Activated CD4-positive, alpha-beta T cell treated with anti-CD3 and anti-CD28 coated beads for 36 hours (primary cell): ENCODE measurements at regions of chr13 and their contacts with region 1.

Region 1: GRCh38 chr13:74287724-74288169 is 153.5 kb upstream of the KLF12 start:
- DNase-seq: peak; percentile 88
- ATAC-seq: peak; percentile 60
- H3K4me3 Mint-ChIP-seq: peak overlapping the region; percentile 64
- H3K27ac Mint-ChIP-seq: peak overlapping the region; percentile 68
- H3K4me1 Mint-ChIP-seq: peaks cover 60% of the 10 kb centered on the region
- H3K27me3 Mint-ChIP-seq: no peaks in the 10 kb centered on the region

Region 2: DNA sequence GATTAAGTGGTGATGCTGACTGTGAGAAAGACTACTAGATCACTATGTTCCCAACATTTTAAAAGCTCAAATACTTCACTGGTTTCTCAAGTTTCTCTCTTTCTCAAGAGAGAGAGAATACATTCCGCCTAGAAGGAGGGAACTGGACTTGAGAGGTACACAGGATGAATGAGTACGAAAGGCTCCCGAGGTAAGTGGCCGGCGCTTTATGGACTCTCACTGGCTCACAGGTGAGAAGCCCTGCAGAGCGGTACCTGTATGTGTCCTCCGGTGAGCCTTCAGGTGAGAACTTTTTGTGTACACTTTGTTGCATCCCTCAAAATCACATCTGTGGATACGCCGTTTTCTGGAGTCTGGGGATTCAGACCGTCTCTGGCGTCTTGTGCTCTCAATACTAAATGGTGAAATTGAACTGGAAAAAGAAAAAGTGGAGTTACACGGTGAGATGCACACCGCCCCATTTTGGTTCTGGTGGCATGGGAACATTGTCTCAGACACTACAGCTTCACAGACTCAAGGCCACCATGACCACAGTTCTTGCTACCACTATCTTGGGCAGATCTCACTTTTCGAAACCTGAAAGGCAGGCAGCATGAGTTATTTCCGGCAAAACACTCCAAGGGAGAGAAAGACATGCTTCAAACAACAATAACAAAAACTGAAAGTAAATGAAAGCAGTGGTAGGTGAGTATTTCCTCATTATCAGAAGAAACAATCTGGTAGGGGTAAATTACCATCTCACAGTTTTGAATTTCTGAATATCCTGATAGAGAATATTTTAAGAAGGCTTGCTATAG is 572.4 kb before region 1 on chr13:
- CTCF ChIA-PET with region 1: no interaction called
- POLR2A ChIA-PET with region 1: no interaction called
- intact Hi-C with region 1: loop called in 1 of 2 experiments (anchors 2 kb)
- DNase-seq: peak; percentile 68
- ATAC-seq: peak; percentile 85
- H3K4me3 Mint-ChIP-seq: peak overlapping the region; percentile 50
- H3K27ac Mint-ChIP-seq: peak overlapping the region; percentile 83
- H3K4me1 Mint-ChIP-seq: peaks cover 53% of the 10 kb centered on the region
- H3K27me3 Mint-ChIP-seq: no peaks in the 10 kb centered on the region

Region 3: GRCh38 chr13:73835138-73835721 is 452.5 kb before region 1 on chr13:
- CTCF ChIA-PET with region 1: interaction called, 19 read pairs
- POLR2A ChIA-PET with region 1: no interaction called
- intact Hi-C with region 1: loop called (anchors 1 kb)
- DNase-seq: no peak
- ATAC-seq: peak; percentile 57
- H3K4me3 Mint-ChIP-seq: no peak overlapping the region
- H3K27ac Mint-ChIP-seq: no peak overlapping the region
- H3K4me1 Mint-ChIP-seq: peaks cover 46% of the 10 kb centered on the region
- H3K27me3 Mint-ChIP-seq: no peaks in the 10 kb centered on the region

Region 4: GRCh38 chr13:73943137-73943964 is 344.4 kb before region 1 on chr13:
- CTCF ChIA-PET with region 1: interaction called, 3 read pairs
- POLR2A ChIA-PET with region 1: no interaction called
- intact Hi-C with region 1: loop called (anchors 5 kb)
- DNase-seq: no peak
- ATAC-seq: peak; percentile 88
- H3K4me3 Mint-ChIP-seq: peak overlapping the region; percentile 50
- H3K27ac Mint-ChIP-seq: peak overlapping the region; percentile 92
- H3K4me1 Mint-ChIP-seq: peaks cover 83% of the 10 kb centered on the region
- H3K27me3 Mint-ChIP-seq: no peaks in the 10 kb centered on the region

Region 5: GRCh38 chr13:74062933-74063332 is 224.8 kb before region 1 on chr13:
- CTCF ChIA-PET with region 1: no interaction called
- POLR2A ChIA-PET with region 1: no interaction called
- intact Hi-C with region 1: loop called (anchors 5 to 10 kb)
- DNase-seq: peak; percentile 60
- ATAC-seq: peak; percentile 67
- H3K4me3 Mint-ChIP-seq: peak overlapping the region; percentile 64
- H3K27ac Mint-ChIP-seq: peak overlapping the region; percentile 92
- H3K4me1 Mint-ChIP-seq: peaks cover 82% of the 10 kb centered on the region
- H3K27me3 Mint-ChIP-seq: no peaks in the 10 kb centered on the region

Region 6: DNA sequence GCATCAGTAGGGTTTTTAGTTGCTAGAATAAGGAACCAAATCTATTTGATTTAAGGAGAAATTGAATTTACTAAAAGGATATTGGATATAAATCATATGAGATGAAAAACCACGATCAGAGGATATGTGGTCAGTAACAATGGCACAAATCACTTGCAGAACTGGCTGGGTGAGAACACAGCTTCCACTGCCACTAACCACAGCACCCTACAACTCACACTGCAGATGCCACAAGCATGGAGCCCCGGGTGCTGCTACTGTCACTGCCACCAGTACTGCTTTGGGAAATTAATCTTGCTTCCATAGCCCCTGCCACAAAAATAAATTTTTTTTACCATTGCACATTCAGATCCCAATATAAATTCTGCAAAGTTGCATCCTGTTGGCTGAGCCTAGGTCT is 112.9 kb before region 1 on chr13:
- CTCF ChIA-PET with region 1: no interaction called
- POLR2A ChIA-PET with region 1: no interaction called
- intact Hi-C with region 1: no loop called
- DNase-seq: no peak
- ATAC-seq: no peak
- H3K4me3 Mint-ChIP-seq: no peak overlapping the region
- H3K27ac Mint-ChIP-seq: no peak overlapping the region
- H3K4me1 Mint-ChIP-seq: no peaks in the 10 kb centered on the region
- H3K27me3 Mint-ChIP-seq: no peaks in the 10 kb centered on the region

Region 7: DNA sequence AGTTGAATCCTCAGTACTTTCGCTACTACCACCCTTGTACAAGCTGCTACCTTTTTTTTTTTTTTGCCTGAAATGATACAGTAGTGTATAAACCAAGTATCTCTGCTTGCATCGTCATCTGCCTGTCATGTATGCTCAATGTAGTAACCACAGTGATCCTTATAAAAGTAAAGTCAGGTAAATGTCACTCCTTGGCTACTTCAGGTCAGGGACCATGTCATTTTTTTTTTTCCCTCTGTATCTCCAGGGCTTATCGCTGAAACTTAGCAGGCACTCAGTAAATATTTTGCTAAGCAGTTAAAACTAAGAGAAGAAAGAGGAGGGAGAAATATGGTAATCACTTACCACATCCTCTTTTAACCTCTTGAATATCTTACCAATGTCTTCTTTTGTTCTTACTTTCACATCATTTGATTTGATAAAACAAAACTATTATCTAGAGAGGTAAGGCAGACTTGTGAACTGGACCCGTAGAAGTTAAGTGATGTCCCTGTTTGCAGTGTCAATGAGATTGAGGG is 56.7 kb before region 1 on chr13:
- CTCF ChIA-PET with region 1: interaction called, 10 read pairs
- POLR2A ChIA-PET with region 1: interaction called, 4 read pairs
- intact Hi-C with region 1: loop called (anchors 1 to 5 kb)
- DNase-seq: no peak
- ATAC-seq: peak; percentile 97
- H3K4me3 Mint-ChIP-seq: peak overlapping the region; percentile 57
- H3K27ac Mint-ChIP-seq: peak overlapping the region; percentile 92
- H3K4me1 Mint-ChIP-seq: peaks cover 35% of the 10 kb centered on the region
- H3K27me3 Mint-ChIP-seq: no peaks in the 10 kb centered on the region

Region 8: DNA sequence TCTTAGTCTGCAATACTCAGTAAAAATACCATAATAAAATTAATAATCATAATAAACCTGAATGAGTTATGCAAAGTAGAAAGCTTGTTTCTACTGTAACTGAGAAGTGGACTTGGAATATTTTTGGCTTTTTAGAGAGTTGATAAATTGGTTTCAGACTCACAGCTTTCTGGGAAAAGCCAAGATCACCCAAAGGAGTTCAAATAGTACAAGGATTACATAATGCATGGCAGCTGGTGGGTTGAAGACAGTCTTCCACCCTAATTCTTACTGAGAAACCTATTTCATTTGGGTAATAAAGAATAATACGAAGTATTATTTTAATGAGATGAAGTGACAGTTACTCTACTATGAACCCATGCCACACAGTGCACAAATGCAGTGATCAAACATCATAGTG is 14.2 kb before region 1 on chr13:
- CTCF ChIA-PET with region 1: interaction called, 11 read pairs
- POLR2A ChIA-PET with region 1: no interaction called
- intact Hi-C with region 1: no loop called
- DNase-seq: no peak
- ATAC-seq: no peak
- H3K4me3 Mint-ChIP-seq: no peak overlapping the region
- H3K27ac Mint-ChIP-seq: no peak overlapping the region
- H3K4me1 Mint-ChIP-seq: peaks cover 5% of the 10 kb centered on the region
- H3K27me3 Mint-ChIP-seq: no peaks in the 10 kb centered on the region